Naive thymus-derived CD4-positive, alpha-beta T cell (primary cell): ENCODE measurements at regions of chr19 and their contacts with region 1.

Region 1: GRCh38 chr19:11848594-11849469 is at the start of gene ZNF439:
- DNase-seq: peak; percentile 74 to 93 (median 86)
- ATAC-seq: peak; percentile 100
- H3K4me3 ChIP-seq: peak within 1 kb of the TSS; percentile 88
- H3K4me3 Mint-ChIP-seq: peak within 1 kb of the TSS; percentile 88 to 93 (median 91)
- H3K27ac ChIP-seq: peak within 1 kb of the TSS; percentile 66
- H3K27ac Mint-ChIP-seq: peak within 1 kb of the TSS; percentile 81 to 96 (median 90)
- H3K4me1 ChIP-seq: peaks cover 0 to 15% of the 10 kb centered on the region in 2 donors
- H3K4me1 Mint-ChIP-seq: peaks cover 13 to 42% (median 24%) of the 10 kb centered on the region in 7 donors
- H3K27me3 ChIP-seq: no peaks in the 10 kb centered on the region
- H3K27me3 Mint-ChIP-seq: no peaks in the 10 kb centered on the region
- total RNA-seq, gene ZNF439: 5.6 to 22.5 (median 14.1) TPM

Region 2: GRCh38 chr19:11806354-11807098 is 42.3 kb before region 1 on chr19:
- CTCF ChIA-PET with region 1: no interaction called
- POLR2A ChIA-PET with region 1: no interaction called
- intact Hi-C with region 1: no loop called
- DNase-seq: peak in 4 of 9 donors; percentile 6 to 15 (median 8)
- ATAC-seq: no peak
- H3K4me3 ChIP-seq: no peak overlapping the region
- H3K4me3 Mint-ChIP-seq: no peak overlapping the region
- H3K27ac ChIP-seq: no peak overlapping the region
- H3K27ac Mint-ChIP-seq: no peak overlapping the region
- H3K4me1 ChIP-seq: no peaks in the 10 kb centered on the region
- H3K4me1 Mint-ChIP-seq: peaks cover 0 to 4% (median 0%) of the 10 kb centered on the region in 7 donors
- H3K27me3 ChIP-seq: no peaks in the 10 kb centered on the region
- H3K27me3 Mint-ChIP-seq: no peaks in the 10 kb centered on the region

Region 3: DNA sequence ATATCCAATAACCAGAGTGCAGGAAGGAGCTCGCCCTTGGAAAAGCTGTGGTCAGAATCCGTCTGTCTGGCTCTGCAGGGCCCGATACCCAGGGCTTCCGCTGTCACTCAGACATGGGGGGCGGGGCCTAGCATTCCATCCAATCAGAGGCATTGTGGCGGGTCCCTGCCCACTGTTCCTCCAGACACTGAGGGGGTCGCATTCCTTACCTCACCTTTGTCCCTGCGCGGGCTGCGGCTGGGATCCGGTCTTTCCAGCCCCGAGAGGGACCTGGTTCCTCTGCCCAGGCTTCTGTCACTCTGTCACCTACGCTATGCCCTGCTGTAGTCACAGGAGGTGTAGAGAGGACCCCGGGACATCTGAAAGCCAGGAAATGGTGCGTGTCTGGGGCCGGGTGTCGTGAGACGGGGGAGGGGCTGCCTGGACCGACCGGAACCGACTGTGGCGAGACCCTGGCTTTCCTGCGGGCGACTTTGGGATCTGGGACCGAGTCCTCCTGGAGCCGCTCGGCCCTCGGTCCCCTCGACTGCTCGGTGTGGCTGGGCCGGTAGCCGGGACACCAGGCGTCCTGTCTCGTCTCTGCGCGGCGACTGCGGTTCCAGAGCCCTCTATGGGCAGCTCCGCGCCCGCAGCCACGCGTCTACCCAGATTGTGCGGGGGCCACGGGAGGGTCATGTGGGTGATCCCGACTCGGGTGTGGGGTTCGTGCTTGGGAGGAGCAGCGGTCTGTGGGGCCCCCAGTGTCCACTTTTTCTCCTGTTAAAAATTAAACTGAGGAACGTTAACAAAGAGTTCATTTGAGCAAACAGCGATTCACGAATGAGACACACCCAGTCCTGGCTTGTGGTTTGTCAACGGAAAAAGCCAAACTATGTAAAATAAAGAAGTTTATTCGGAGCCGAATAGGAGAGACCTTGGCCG is 39.0 kb after region 1 on chr19 and contains the start of gene ZNF69:
- CTCF ChIA-PET with region 1: no interaction called
- POLR2A ChIA-PET with region 1: no interaction called
- intact Hi-C with region 1: loop called in 1 of 2 experiments (anchors 2 kb)
- DNase-seq: peak; percentile 25 to 64 (median 55)
- ATAC-seq: peak; percentile 87
- H3K4me3 ChIP-seq: peak within 1 kb of the TSS; percentile 86
- H3K4me3 Mint-ChIP-seq: peak within 1 kb of the TSS; percentile 88 to 95 (median 94)
- H3K27ac ChIP-seq: peak within 1 kb of the TSS; percentile 71
- H3K27ac Mint-ChIP-seq: peak within 1 kb of the TSS; percentile 85 to 92 (median 90)
- H3K4me1 ChIP-seq: peaks cover 5 to 9% of the 10 kb centered on the region in 2 donors
- H3K4me1 Mint-ChIP-seq: peaks cover 20 to 42% (median 27%) of the 10 kb centered on the region in 7 donors
- H3K27me3 ChIP-seq: no peaks in the 10 kb centered on the region
- H3K27me3 Mint-ChIP-seq: peaks cover 0 to 3% (median 0%) of the 10 kb centered on the region in 5 donors
- total RNA-seq, gene ZNF69: 1.4 to 12.1 (median 5.0) TPM